Lower leg skin (tissue), 4 donors: ENCODE measurements at regions of chr3 and their contacts with region 1.

Region 1: GRCh38 chr3:138068579-138069174 is 46.7 kb downstream of the DZIP1L start:
- DNase-seq: peak; percentile 60 to 95
- H3K4me3 ChIP-seq: no peak overlapping the region
- CTCF ChIP-seq: peak in 1 of 3 donors; percentile 79
- POLR2A ChIP-seq: no peak

Region 2: DNA sequence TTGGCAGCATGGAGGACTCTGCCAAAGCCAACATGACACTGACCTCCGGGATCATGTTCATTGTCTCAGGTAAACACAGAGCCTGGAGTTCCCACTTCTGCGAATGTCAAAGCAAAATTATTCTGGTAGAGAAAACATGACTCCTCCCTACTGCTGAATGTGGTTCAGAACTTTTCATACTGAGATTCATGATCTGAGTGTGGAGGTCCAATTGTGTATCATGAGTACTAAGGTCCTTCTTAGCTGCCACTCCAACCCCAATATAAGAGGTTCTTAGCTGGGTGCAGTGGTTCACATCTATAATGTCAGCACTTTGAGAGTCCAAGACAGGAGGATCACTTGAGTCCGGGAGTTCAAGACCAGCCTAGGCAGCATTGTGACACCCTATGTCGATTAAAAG is 44.9 kb before region 1 on chr3:
- intact Hi-C with region 1: no loop called
- DNase-seq: no peak
- H3K4me3 ChIP-seq: no peak overlapping the region
- CTCF ChIP-seq: no peak
- POLR2A ChIP-seq: no peak

Region 3: GRCh38 chr3:138124706-138125355 is 56.2 kb after region 1 on chr3:
- intact Hi-C with region 1: loop called (anchors 5 kb)
- DNase-seq: no peak
- H3K4me3 ChIP-seq: no peak overlapping the region
- CTCF ChIP-seq: no peak
- POLR2A ChIP-seq: no peak

Region 4: DNA sequence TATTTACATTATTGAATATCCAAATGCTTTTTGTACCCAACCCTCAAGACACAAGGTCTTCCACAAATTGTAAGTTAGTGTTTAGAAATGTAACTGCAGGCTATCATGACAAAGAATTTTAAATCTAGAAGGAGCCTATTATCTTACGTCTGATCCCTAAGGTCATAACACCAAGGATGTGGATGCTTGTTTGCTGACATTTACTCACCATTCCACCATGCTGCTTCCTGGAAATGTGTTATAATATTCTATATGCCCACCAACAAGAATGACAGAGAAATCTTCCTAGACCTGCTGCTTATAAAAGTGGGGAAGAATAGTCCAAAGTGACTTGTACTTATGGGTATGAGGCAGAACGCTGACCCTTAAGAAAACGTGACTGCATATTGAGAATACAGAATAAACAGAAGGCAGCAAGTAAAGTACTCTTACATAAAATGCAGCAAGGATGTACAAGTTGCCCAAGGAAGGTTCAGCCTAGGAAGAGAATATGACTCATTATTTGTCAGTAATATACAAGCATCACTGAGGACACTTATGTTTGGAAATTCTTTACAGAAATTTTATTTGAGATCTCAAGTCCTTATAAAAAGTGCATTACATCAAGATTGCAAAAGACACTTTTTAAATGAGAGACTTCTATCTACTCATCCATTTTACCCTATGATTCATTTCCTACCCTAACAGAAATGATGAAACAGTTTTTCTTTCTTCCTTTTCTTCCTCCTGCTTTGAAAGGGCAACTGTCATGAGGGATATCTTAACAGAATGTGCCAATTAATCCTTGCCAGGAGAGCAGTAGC is 425.3 kb after region 1 on chr3:
- intact Hi-C with region 1: no loop called
- DNase-seq: no peak
- H3K4me3 ChIP-seq: no peak overlapping the region
- CTCF ChIP-seq: no peak
- POLR2A ChIP-seq: no peak